MCF 10A (cell line): ENCODE measurements at regions of chr6 and their contacts with region 1.

Region 1: DNA sequence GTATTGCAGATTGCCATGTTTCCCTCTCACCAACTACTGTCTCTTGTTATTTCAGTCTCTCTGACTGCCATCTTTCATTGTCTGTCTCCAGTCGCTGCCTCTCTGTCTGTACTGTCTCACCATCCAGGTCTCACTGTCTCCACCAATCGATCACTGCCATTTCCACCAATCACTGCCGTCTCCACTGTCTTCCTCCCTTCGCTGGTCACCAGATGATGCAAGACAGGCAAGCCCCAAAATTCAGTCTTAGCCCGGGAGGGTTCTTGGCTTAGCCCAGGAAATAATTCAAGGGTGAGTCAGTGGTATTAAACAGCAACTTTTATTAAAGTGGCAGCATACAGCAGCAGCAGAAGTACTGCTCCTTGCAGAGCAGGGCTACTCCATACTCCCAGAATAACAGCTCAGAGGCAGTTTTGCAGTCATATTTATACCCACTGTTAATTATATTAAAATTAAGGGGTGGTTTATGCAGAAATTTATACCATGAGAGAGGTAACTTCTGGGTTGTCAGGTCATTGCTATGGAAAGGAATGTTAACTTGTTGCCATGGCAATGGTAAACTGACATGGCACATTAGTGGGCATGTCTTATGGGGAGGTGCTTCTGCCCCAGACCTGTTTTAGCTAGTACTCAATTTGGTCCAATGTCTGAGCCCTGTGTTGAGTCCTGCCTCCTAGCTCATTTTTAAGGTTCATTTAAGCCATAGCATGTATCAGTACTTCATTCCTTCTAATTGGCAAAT is 23.0 kb upstream of the ECHDC1 start:
- DNase-seq: peak; percentile 99
- H3K4me3 Mint-ChIP-seq: peak overlapping the region; percentile 47
- H3K27ac Mint-ChIP-seq: peak overlapping the region; percentile 95
- H3K4me1 Mint-ChIP-seq: peaks cover 19% of the 10 kb centered on the region
- H3K27me3 Mint-ChIP-seq: no peaks in the 10 kb centered on the region
- CTCF ChIP-seq: no peak

Region 2: GRCh38 chr6:127342946-127343808 is 23.3 kb before region 1 on chr6 and contains the start of gene ECHDC1:
- CTCF ChIA-PET with region 1: interaction called, 4 read pairs
- POLR2A ChIA-PET with region 1: interaction called, 18 read pairs
- intact Hi-C with region 1: loop called (anchors 1 kb)
- DNase-seq: peak; percentile 70
- H3K4me3 Mint-ChIP-seq: no peak within 1 kb of the TSS
- H3K27ac Mint-ChIP-seq: no peak within 1 kb of the TSS
- H3K4me1 Mint-ChIP-seq: peaks cover 37% of the 10 kb centered on the region
- H3K27me3 Mint-ChIP-seq: no peaks in the 10 kb centered on the region
- CTCF ChIP-seq: no peak
- total RNA-seq, gene ECHDC1: 60.4 and 70.7 TPM in 2 replicates